ENCODE measurements at regions of chr19 and their contacts with region 1.

Region 1: DNA sequence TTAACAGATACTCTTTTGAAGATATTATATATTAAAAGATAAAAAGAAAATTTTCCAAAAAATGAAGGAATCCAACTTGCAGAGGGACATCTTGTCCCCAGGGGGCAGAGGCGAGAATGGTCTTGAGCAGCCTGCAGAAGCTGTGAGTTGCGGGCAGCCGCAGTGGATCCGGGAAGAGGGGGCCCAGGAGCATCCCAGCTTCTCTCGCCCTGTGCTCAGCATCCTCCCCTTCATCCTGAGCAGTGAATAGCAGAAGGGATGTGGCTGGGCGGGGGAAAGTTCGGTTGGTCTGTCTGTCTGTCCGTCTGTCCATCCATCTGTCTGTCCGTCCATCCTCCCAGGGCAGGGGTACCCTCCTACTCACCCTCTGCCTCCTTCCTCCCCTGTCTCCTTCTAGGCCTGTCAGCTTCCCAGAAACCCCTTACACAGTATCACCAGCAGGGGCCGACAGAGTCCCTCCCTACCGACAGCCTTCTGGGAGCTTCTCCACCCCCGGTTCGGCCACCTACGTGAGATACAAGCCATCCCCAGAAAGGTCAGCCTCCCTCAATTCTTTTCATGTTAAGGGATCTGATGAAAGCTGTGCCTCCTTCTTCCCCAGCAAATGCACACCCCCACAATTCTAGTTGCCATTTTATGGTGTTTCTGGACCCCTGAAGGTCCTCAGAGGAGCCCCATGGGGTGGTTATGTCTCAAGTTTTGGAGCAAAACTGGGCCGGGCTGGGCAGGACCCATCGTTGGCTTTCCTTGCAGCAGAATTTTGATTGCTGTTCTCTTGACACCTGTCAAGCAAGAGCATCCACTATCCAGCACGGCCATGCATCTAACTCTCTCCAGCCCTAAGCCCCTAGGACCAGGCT is 81.6 kb downstream of the DPF1 start:
- DNase-seq: peak; percentile 82
- ATAC-seq: peak; percentile 95
- H3K4me3 Mint-ChIP-seq: no peak overlapping the region
- H3K27ac Mint-ChIP-seq: peak overlapping the region; percentile 25
- H3K4me1 Mint-ChIP-seq: peaks cover 8% of the 10 kb centered on the region
- H3K27me3 Mint-ChIP-seq: no peaks in the 10 kb centered on the region
- CTCF ChIP-seq: peak; percentile 76

Region 2: DNA sequence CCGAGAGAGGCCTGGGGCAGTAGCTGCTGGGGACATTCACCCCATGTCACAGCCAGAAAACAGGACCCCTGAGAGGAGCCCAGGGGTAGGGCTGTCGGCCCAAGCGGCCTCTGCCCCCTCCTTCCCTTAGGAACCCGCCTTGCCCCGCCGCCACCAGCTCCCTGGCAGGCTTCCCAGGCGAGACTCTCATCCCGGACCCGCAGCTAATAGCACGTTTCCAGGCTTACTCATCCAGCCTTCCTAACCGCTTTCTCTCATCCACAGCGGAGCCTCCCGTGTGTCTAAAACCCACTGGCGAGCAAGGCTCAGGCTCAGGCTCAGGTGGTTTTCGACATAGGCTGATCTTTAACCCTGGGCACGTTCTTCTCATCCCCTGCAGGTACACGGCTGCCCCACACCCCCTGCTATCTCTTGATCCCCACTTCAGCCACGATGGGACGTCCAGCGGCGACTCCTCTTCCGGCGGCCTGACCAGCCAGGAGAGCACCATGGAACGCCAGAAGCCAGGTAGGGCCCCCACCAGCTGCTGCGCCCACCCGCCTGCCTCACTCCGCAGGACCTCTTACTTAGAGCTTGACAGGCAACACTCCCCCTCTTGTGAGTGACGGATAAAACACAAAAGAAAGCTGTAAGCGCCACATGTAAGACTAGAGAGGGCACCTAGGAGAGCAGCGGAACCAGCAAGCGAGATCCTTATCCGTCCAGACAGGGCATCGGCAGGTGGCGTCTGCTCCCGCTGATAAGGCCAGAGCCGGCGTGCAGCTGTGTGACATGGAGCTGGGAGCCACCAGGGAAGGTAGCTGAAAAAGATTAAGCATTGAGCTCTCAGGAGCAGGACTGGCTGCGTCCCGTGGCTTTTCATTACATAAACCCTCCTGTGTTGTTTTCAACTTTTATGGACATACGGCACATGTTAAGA is 10.3 kb after region 1 on chr19:
- CTCF ChIA-PET with region 1: interaction called, 13 read pairs
- POLR2A ChIA-PET with region 1: no interaction called
- intact Hi-C with region 1: no loop called
- DNase-seq: no peak
- ATAC-seq: no peak
- H3K4me3 Mint-ChIP-seq: no peak overlapping the region
- H3K27ac Mint-ChIP-seq: no peak overlapping the region
- H3K4me1 Mint-ChIP-seq: no peaks in the 10 kb centered on the region
- H3K27me3 Mint-ChIP-seq: no peaks in the 10 kb centered on the region
- CTCF ChIP-seq: no peak

Region 3: DNA sequence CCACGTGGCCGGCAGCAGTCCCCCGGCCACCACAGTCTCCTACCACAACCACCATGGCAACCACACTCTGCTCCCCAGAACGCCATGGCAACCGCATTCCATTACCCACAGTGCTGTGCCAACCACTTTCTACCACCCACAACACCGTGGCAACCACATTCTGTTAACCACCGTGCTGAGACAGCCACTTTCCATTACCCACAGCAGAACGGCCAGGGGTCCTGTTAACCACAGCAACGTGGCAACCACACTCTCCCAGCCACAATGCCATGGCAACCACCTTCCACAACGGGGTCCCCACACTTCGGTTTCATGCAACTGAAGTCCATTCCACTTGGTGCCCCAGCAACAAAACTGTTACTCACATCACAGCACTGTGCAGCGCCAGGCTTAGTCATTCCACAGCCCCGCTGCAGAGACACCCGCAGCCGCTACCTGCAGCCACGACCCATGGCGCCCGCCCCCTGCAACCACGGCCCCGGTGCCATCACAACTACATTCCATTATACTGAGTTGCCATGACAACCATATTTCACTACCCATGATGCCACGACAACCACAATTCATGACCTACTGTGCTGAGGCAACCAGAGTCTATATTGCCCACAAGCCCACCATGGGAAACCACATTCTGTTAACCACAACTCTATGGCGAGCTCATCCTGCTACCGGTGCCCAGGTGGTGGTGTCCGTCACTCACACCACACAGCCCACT is 71.7 kb after region 1 on chr19:
- CTCF ChIA-PET with region 1: no interaction called
- POLR2A ChIA-PET with region 1: interaction called, 3 read pairs
- intact Hi-C with region 1: loop called (anchors 10 kb)
- DNase-seq: peak; percentile 92
- ATAC-seq: peak; percentile 90
- H3K4me3 Mint-ChIP-seq: peak overlapping the region; percentile 63
- H3K27ac Mint-ChIP-seq: peak overlapping the region; percentile 84
- H3K4me1 Mint-ChIP-seq: peaks cover 23% of the 10 kb centered on the region
- H3K27me3 Mint-ChIP-seq: peaks cover 60% of the 10 kb centered on the region
- CTCF ChIP-seq: no peak

Measured in activated CD8-positive, alpha-beta T cell treated with anti-CD3 and anti-CD28 coated beads for 36 hours (primary cell).